ENCODE measurements at regions of chr1 and their contacts with region 1.

Region 1: DNA sequence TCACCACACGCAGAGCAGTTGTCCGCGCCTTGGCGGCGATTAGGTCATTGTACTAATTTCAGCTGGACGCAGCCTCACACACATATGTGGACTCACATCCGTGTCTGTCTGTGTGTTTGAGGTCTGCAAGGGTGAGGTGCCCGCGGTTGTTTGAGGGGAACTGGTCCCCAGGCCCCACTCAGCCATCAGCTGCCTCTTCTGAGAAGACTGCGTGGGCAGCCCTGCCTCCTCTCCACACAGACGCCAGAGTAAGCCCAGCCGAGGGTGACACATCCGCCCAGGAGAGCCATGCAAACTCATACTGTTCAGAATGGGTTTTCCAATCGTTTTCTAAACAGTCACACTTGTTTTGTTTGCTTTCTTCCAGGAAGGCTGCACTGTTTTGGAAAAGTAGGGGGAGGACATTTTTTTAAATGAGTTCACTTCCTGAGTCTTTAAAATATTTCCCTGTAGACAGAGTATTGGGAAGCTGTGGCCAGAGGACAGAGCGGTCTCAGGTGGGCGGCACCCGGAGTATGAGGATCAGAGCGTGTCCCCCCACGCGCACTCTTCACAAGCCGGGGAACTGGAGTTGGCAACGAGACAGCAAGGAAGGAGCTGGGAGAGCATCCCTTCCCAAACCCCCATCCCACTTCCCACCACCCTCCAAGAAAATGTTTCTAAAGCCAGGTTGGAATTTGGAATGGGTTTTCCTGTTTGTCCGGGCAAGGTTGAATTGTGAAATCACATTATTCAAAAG is 53.3 kb downstream of the TOMM20 start:
- DNase-seq: peak in 28 of 42 donors; percentile 19 to 80 (median 47)

Region 2: DNA sequence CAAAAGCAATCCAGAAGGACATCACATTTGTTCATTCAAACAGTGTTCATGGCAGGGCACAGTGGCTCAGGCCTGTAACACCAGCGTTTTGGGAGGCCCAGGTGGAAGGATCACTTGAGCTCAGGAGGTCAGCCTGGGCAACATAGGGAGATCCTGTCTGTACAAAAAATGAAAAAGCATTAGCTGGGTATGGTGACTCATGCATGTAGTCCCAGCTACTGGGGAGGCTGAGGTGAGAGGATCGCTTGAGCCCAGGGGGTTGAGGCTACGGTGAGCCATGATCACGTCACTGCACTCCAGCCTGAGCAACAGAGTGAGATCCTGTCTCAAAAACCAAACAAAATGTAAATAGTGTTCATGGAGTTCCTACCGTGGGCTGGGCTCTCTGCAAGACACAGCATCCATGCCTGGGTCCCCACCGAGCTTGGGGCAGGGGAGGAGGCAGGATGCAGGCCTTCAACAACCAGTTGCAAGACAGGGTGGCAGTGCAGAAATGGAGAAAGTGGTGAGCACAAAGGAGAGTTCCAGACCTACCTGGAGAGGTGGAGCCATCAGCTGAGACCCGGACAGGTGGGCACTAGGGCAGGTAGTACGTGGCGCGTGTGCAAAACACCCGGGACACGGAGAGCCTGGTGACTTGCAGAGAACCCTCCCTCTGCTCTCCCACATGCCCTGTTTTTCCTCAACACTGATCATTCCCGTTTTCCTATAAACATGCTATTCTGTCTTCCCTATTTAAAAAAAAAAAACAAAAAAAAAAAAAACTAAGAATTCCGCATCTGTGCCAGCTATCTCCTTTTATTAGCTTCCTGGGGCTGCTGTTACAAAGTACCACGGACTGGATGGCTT is 85.7 kb before region 1 on chr1:
- intact Hi-C with region 1: loop called (anchors 5 kb)
- DNase-seq: peak in 1 of 42 donors; percentile 34